Activated B cell treated with CpG ODN at 0.5 μM for 24 hours (primary cell): ENCODE measurements at regions of chr1 and their contacts with region 1.

Region 1: GRCh38 chr1:109643385-109644230 is 12.3 kb upstream of the GSTM4 start:
- DNase-seq: peak; percentile 81
- ATAC-seq: peak; percentile 90
- H3K4me3 Mint-ChIP-seq: peak overlapping the region; percentile 24
- H3K27ac Mint-ChIP-seq: no peak overlapping the region
- H3K4me1 Mint-ChIP-seq: peaks cover 19% of the 10 kb centered on the region
- H3K27me3 Mint-ChIP-seq: peaks cover 2% of the 10 kb centered on the region
- CTCF ChIP-seq: peak; percentile 95

Region 2: GRCh38 chr1:109620841-109621286 is 22.7 kb before region 1 on chr1:
- CTCF ChIA-PET with region 1: interaction called, 19 read pairs
- POLR2A ChIA-PET with region 1: interaction called, 7 read pairs
- intact Hi-C with region 1: loop called (anchors 1 kb)
- DNase-seq: peak; percentile 80
- ATAC-seq: peak; percentile 67
- H3K4me3 Mint-ChIP-seq: peak overlapping the region; percentile 90
- H3K27ac Mint-ChIP-seq: peak overlapping the region; percentile 93
- H3K4me1 Mint-ChIP-seq: peaks cover 78% of the 10 kb centered on the region
- H3K27me3 Mint-ChIP-seq: no peaks in the 10 kb centered on the region
- CTCF ChIP-seq: no peak

Region 3: DNA sequence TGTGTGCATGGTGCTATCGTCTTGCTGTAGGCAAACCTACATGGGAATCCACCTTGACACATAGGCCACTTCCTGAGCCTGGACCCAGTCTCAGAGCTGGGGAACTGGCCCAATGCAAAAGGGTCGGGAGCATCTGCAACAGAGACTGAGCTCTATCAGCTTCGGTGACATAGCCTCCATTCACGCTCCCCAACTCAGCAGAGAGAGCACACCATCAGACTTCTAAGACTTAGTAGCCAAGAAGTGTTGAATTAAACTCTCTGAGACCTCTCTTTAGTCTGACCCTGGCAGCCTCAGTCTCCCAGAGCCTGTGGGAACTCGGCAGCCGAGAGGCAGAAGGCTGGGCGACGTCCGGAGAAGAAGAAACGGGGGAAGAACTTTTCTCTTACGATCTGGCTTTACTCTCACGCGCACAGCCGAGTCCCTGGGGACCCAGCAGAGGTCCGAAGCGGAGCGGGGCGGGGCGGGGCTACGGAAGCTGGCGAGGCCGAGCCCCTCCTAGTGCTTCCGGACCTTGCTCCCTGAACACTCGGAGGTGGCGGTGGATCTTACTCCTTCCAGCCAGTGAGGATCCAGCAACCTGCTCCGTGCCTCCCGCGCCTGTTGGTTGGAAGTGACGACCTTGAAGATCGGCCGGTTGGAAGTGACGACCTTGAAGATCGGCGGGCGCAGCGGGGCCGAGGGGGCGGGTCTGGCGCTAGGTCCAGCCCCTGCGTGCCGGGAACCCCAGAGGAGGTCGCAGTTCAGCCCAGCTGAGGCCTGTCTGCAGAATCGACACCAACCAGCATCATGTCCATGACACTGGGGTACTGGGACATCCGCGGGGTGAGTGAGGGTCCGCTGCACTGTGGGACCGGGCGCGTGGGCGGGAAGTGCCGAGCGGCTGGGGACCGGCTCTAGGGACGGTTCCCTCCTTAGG is 12.3 kb after region 1 on chr1 and contains the start of gene GSTM4:
- CTCF ChIA-PET with region 1: interaction called, 63 read pairs
- POLR2A ChIA-PET with region 1: interaction called, 7 read pairs
- intact Hi-C with region 1: loop called (anchors 1 kb)
- DNase-seq: peak; percentile 82
- ATAC-seq: peak; percentile 97
- H3K4me3 Mint-ChIP-seq: peak within 1 kb of the TSS; percentile 96
- H3K27ac Mint-ChIP-seq: peak within 1 kb of the TSS; percentile 94
- H3K4me1 Mint-ChIP-seq: peaks cover 24% of the 10 kb centered on the region
- H3K27me3 Mint-ChIP-seq: peaks cover 10% of the 10 kb centered on the region
- CTCF ChIP-seq: no peak
- total RNA-seq, gene GSTM4: 13.1 and 13.7 TPM in 2 replicates

Region 4: DNA sequence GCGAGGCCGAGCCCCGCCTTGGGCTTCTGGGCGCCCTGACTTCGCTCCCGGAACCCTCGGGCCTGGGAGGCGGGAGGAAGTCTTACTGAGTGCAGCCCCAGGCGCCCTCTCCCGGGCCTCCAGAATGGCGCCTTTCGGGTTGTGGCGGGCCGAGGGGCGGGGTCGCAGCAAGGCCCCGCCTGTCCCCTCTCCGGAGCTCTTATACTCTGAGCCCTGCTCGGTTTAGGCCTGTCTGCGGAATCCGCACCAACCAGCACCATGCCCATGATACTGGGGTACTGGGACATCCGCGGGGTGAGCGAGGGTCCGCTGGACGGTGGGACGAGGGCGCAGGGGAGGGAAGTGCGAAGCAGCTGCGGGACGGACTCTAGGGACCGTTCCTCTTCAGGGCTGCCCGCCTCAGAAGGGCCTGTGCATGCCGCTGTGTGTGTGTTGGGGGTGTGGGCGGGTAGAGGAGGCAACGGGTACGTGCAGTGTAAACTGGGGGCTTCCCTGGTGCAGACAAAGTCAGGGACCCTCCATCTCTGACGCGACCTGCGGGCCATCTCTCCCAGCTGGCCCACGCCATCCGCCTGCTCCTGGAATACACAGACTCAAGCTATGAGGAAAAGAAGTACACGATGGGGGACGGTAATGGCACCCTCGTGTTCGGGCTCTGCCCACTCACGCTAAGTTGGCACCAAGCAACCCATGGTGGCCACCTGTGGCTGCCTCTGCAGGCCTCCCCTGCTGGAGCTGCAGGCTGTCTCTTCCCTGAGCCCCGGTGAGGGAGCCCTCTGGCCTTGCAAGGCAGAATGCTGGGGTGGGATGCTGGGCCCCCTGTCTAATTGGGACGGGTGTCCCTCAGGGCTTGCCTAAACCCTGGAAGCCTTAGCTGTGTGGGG is 44.2 kb after region 1 on chr1 and contains the start of gene GSTM1:
- CTCF ChIA-PET with region 1: interaction called, 12 read pairs
- POLR2A ChIA-PET with region 1: interaction called, 5 read pairs
- intact Hi-C with region 1: loop called (anchors 1 kb)
- DNase-seq: peak; percentile 62
- ATAC-seq: peak; percentile 98
- H3K4me3 Mint-ChIP-seq: peak within 1 kb of the TSS; percentile 89
- H3K27ac Mint-ChIP-seq: peak within 1 kb of the TSS; percentile 87
- H3K4me1 Mint-ChIP-seq: peaks cover 11% of the 10 kb centered on the region
- H3K27me3 Mint-ChIP-seq: no peaks in the 10 kb centered on the region
- CTCF ChIP-seq: no peak
- total RNA-seq, gene GSTM1: 22.2 and 22.4 TPM in 2 replicates

Region 5: DNA sequence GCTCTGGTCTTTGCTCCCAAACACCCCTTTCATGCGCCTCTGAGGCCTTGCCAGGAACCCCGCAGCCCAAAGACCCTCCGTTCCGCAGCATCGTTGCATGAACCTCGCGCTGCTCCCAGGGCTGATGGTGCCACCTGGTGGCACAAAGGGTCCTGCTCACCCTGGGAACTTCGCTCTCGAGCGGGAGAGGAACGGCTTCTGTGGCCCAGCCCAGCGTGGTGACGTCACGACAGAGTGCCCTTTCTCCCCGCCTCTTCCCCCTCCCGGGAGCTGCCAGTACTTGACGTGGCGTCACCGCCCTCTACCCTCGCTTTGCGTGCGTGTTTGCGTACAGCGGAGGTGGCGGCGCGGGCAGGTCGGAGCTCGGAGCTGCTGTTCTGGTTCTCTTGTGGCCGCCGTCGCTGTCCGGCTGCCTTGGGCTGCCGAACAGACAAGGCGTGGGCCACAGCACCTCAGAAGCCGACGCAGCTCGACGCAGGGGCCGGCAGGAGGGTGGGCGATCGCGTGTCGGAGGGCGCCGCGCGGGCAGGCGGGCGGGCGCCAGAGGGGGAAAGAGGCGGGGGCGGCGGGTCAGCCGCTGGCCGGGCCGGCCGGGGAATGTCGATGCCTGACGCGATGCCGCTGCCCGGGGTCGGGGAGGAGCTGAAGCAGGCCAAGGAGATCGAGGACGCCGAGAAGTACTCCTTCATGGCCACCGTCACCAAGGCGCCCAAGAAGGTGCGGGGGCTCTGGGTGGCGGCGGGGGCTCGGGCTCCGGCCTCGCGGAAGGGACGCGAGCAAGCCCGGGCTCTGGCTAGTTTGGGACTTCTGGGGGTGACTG is 341.1 kb after region 1 on chr1 and contains the start of gene AHCYL1:
- CTCF ChIA-PET with region 1: interaction called, 52 read pairs
- POLR2A ChIA-PET with region 1: interaction called, 4 read pairs
- intact Hi-C with region 1: loop called (anchors 1 kb)
- DNase-seq: peak; percentile 97
- ATAC-seq: peak; percentile 99
- H3K4me3 Mint-ChIP-seq: peak within 1 kb of the TSS; percentile 98
- H3K27ac Mint-ChIP-seq: peak within 1 kb of the TSS; percentile 93
- H3K4me1 Mint-ChIP-seq: peaks cover 37% of the 10 kb centered on the region
- H3K27me3 Mint-ChIP-seq: peaks cover 5% of the 10 kb centered on the region
- CTCF ChIP-seq: peak; percentile 56
- total RNA-seq, gene AHCYL1: 40.5 and 41.6 TPM in 2 replicates

Region 6: GRCh38 chr1:110196917-110197765 is 553.5 kb after region 1 on chr1:
- CTCF ChIA-PET with region 1: no interaction called
- POLR2A ChIA-PET with region 1: no interaction called
- intact Hi-C with region 1: no loop called
- DNase-seq: no peak
- ATAC-seq: peak; percentile 98
- H3K4me3 Mint-ChIP-seq: no peak overlapping the region
- H3K27ac Mint-ChIP-seq: no peak overlapping the region
- H3K4me1 Mint-ChIP-seq: peaks cover 3% of the 10 kb centered on the region
- H3K27me3 Mint-ChIP-seq: no peaks in the 10 kb centered on the region
- CTCF ChIP-seq: peak; percentile 36

Region 7: GRCh38 chr1:110495926-110496600 is 852.5 kb after region 1 on chr1:
- CTCF ChIA-PET with region 1: no interaction called
- POLR2A ChIA-PET with region 1: no interaction called
- intact Hi-C with region 1: loop called (anchors 10 kb)
- DNase-seq: peak; percentile 50
- ATAC-seq: peak; percentile 86
- H3K4me3 Mint-ChIP-seq: no peak overlapping the region
- H3K27ac Mint-ChIP-seq: no peak overlapping the region
- H3K4me1 Mint-ChIP-seq: no peaks in the 10 kb centered on the region
- H3K27me3 Mint-ChIP-seq: no peaks in the 10 kb centered on the region
- CTCF ChIP-seq: no peak